Heart right ventricle (tissue), 16 donors: ENCODE measurements at regions of chr17 and their contacts with region 1.

Region 1: GRCh38 chr17:13114601-13115031 is 96.8 kb upstream of the ELAC2 start:
- DNase-seq: peak; percentile 10 to 31
- ATAC-seq: peak in 6 of 8 donors; percentile 46 to 85 (median 64)
- H3K4me3 ChIP-seq: peak overlapping the region in 1 of 10 donors; percentile 18
- H3K27ac ChIP-seq: no peak overlapping the region
- H3K4me1 ChIP-seq: peaks cover 0 to 7% (median 2%) of the 10 kb centered on the region in 9 donors
- H3K27me3 ChIP-seq: peaks cover 0 to 33% (median 17%) of the 10 kb centered on the region in 7 donors
- CTCF ChIP-seq: peak; percentile 21 to 76 (median 65)

Region 2: GRCh38 chr17:13228225-13228624 is 113.6 kb after region 1 on chr17:
- intact Hi-C with region 1: loop called in 1 of 10 experiments (anchors 5 kb)
- DNase-seq: no peak
- ATAC-seq: no peak
- H3K4me3 ChIP-seq: no peak overlapping the region
- H3K27ac ChIP-seq: no peak overlapping the region
- H3K4me1 ChIP-seq: no peaks in the 10 kb centered on the region
- H3K27me3 ChIP-seq: peaks cover 0 to 10% (median 0%) of the 10 kb centered on the region in 7 donors
- CTCF ChIP-seq: no peak